Activated B cell treated with CpG ODN at 0.5 μM for 24 hours (primary cell): ENCODE measurements at regions of chr2 and their contacts with region 1.

Region 1: DNA sequence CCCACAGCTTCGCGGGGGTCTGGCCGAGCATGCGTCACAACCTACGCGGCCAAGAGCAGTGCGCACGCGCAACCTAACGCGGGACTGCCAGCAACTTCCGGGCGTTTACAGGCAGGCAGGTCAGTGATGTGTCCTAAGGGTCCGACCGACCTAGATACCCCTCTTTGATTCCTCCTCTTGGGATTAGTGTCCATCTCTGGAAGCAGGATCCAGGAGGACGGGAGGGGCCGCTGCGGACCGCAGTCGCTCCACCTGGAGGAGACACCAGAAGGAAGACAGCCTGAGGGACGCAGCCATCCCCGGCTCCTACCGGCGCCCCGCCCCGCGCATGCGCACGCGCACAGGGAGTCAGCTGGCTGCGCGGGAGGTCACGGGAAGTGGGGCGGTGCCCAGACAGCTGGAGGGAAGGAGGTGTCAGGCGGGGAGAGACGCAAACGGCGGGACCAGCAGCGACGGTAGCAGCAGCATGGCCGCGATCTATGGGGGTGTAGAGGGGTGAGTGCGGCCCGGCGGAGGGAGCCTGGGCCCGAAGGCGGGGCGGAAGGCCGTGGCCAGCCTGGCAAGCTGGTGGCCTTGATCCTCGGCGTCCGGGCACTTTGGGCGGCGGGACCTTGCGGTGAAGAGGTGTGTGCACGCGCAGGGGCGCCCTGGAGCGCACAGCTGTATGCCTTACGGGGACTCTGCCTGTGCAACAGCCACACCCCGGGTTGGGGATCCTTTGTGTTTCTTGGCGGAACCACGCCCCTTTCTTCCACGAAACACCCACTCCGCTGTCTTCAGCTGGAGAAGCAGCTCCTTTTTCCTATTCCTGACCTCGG is at the start of gene NAGK:
- DNase-seq: peak; percentile 98
- ATAC-seq: peak; percentile 68
- H3K4me3 Mint-ChIP-seq: peak within 1 kb of the TSS; percentile 97
- H3K27ac Mint-ChIP-seq: peak within 1 kb of the TSS; percentile 99
- H3K4me1 Mint-ChIP-seq: peaks cover 91% of the 10 kb centered on the region
- H3K27me3 Mint-ChIP-seq: no peaks in the 10 kb centered on the region
- CTCF ChIP-seq: no peak
- total RNA-seq, gene NAGK: 175 and 208 TPM in 2 replicates

Region 2: DNA sequence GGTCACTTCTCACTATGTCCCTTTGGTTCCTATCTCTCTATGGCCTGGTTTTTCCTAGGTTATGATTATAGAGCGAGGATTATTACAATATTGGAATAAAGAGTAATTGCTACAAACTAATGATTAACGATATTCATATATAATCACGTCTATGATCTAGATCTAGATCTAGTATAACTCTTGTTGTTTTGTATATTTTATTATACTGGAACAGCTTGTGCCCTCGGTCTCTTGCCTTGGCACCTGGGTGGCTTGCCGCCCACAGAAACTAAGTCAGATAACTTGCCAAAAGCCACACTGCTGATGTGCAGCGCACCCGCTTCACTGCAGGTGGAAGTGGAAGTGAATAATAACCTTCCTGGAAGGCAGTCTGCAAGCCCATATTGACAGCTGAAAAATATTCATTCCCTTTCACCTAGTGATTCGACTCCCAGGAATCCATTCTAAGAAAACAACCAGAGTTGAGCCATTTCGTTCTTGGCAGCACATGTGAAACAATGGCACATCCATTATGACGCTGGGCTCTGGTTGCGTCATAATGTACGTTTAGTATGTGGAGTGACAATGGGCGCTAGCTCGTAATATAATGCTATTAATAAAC is 90.7 kb before region 1 on chr2:
- CTCF ChIA-PET with region 1: no interaction called
- POLR2A ChIA-PET with region 1: interaction called, 3 read pairs
- intact Hi-C with region 1: loop called (anchors 5 kb)
- DNase-seq: no peak
- ATAC-seq: peak; percentile 35
- H3K4me3 Mint-ChIP-seq: peak overlapping the region; percentile 92
- H3K27ac Mint-ChIP-seq: peak overlapping the region; percentile 87
- H3K4me1 Mint-ChIP-seq: peaks cover 16% of the 10 kb centered on the region
- H3K27me3 Mint-ChIP-seq: peaks cover 4% of the 10 kb centered on the region
- CTCF ChIP-seq: no peak

Region 3: DNA sequence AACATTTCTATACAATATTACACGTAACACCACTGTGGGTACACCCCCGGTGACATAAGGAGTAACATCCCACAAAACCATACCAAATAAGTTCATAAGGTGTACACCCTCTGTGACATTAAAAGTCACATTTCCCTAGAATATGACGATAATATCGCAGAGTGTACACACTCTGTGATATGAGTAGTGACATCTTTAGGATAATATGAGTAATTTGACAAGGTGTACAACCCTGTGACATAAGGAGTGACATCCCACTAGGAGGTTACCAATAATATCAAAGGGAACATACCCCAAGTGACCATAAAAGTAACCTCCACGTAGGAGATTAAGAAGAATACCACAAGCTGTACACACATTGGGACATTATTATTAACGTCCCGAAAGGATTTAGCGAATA is 49.8 kb before region 1 on chr2:
- CTCF ChIA-PET with region 1: interaction called, 3 read pairs
- POLR2A ChIA-PET with region 1: interaction called, 5 read pairs
- intact Hi-C with region 1: loop called (anchors 1 kb)
- DNase-seq: no peak
- ATAC-seq: no peak
- H3K4me3 Mint-ChIP-seq: no peak overlapping the region
- H3K27ac Mint-ChIP-seq: no peak overlapping the region
- H3K4me1 Mint-ChIP-seq: peaks cover 5% of the 10 kb centered on the region
- H3K27me3 Mint-ChIP-seq: no peaks in the 10 kb centered on the region
- CTCF ChIP-seq: no peak

Region 4: DNA sequence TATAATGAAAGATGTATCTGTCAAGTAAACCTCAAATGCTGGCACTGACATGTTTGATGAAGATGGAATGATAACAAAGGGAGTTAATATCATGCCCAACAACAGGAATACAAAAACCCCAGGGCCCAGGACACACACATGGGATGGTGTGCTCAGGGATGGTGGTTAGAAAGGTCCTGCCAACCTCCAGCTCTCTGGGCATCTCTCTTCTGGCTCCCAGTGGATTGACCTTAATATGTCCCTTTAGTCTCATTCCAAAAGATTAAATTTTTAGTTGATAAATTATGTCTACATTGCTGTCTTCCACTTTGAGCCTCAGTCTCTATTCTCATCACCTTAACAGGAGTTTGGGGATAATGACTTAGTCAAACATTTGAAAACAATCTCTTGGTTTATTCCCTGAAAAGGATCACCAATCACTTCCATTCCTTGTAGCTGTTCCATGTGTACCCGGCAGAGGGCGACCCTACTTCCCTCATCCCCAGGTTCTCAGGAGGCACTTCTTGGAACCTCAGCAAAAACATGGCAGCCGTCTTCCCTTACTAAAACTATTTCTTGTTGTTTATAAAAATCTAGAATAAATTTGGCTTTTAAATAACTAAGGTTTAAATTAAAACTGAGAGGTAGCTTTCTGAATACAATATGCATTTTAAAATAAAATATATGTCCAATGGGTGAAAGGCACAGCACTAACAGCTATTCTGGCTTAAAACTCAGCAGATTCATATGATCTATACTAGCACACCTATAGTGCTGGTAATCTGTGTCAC is 32.0 kb after region 1 on chr2:
- CTCF ChIA-PET with region 1: interaction called, 22 read pairs
- POLR2A ChIA-PET with region 1: interaction called, 10 read pairs
- intact Hi-C with region 1: no loop called
- DNase-seq: no peak
- ATAC-seq: no peak
- H3K4me3 Mint-ChIP-seq: no peak overlapping the region
- H3K27ac Mint-ChIP-seq: no peak overlapping the region
- H3K4me1 Mint-ChIP-seq: no peaks in the 10 kb centered on the region
- H3K27me3 Mint-ChIP-seq: no peaks in the 10 kb centered on the region
- CTCF ChIP-seq: no peak

Region 5: GRCh38 chr2:71226965-71227560 is 158.6 kb after region 1 on chr2 and contains the start of gene PAIP2B:
- CTCF ChIA-PET with region 1: interaction called, 3 read pairs
- POLR2A ChIA-PET with region 1: interaction called, 11 read pairs
- intact Hi-C with region 1: loop called (anchors 1 kb)
- DNase-seq: peak; percentile 89
- ATAC-seq: peak; percentile 92
- H3K4me3 Mint-ChIP-seq: peak within 1 kb of the TSS; percentile 99
- H3K27ac Mint-ChIP-seq: peak within 1 kb of the TSS; percentile 95
- H3K4me1 Mint-ChIP-seq: peaks cover 28% of the 10 kb centered on the region
- H3K27me3 Mint-ChIP-seq: peaks cover 9% of the 10 kb centered on the region
- CTCF ChIP-seq: no peak
- total RNA-seq, gene PAIP2B: 3.7 and 4.0 TPM in 2 replicates